Sigmoid colon (tissue), 7 donors: ENCODE measurements at regions of chrX and their contacts with region 1.

Region 1: DNA sequence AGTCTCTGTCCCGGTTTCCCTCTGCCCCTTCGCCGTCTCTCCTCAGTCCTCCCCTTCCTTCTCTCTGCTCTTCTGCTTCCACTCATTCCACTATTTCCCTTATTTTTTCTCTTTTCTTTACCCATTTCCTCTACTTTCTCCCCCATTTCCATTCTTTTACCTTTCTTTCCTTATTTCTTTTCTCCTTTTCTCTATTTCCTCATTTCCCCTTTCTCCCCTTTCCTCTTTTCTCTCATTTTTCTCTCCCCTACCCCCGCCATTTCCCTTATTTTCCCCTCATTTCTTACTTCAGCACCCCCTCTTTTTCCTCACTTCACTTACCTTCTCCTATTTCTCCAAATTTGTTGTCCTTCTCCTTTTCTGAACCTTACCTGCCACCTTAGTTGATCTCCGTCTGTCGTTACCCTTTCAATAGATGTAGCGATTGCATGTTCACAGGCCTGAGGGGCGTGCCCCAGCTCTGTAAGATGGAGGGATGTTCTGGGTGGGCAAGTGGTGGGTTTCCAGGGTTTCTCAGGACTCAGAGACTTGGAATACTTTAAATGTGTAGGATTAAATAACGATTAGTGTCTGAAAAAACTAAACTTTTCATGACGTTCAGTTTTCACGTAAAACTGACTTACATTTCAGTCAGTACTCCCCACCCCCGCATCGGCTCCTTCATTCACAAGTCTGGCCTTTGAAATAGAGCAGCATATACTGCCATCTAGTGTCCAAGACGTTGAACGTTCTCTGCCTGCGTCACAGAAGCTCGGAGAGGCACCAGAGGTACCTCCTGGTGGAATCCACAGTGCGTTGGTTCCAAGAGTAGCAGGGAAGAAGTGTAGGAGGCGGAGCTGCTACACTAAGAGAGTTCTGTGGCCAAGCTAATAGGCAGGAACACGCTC is 641 bp upstream of the NCBP2L start:
- DNase-seq: peak; percentile 93
- H3K4me3 ChIP-seq: peak overlapping the region; percentile 44 to 64 (median 54)
- H3K27ac ChIP-seq: peak overlapping the region; percentile 83 to 87 (median 85)
- H3K4me1 ChIP-seq: peaks cover 0 to 17% (median 4%) of the 10 kb centered on the region in 4 donors
- H3K27me3 ChIP-seq: no peaks in the 10 kb centered on the region
- CTCF ChIP-seq: peak; percentile 39 to 75 (median 64)
- EP300 ChIP-seq: no peak
- POLR2A ChIP-seq: no peak

Region 2: GRCh38 chrX:107619885-107620322 is 157.0 kb before region 1 on chrX:
- intact Hi-C with region 1: no loop called
- DNase-seq: no peak
- H3K4me3 ChIP-seq: no peak overlapping the region
- H3K27ac ChIP-seq: no peak overlapping the region
- H3K4me1 ChIP-seq: no peaks in the 10 kb centered on the region
- H3K27me3 ChIP-seq: no peaks in the 10 kb centered on the region
- CTCF ChIP-seq: no peak
- EP300 ChIP-seq: no peak
- POLR2A ChIP-seq: no peak

Region 3: DNA sequence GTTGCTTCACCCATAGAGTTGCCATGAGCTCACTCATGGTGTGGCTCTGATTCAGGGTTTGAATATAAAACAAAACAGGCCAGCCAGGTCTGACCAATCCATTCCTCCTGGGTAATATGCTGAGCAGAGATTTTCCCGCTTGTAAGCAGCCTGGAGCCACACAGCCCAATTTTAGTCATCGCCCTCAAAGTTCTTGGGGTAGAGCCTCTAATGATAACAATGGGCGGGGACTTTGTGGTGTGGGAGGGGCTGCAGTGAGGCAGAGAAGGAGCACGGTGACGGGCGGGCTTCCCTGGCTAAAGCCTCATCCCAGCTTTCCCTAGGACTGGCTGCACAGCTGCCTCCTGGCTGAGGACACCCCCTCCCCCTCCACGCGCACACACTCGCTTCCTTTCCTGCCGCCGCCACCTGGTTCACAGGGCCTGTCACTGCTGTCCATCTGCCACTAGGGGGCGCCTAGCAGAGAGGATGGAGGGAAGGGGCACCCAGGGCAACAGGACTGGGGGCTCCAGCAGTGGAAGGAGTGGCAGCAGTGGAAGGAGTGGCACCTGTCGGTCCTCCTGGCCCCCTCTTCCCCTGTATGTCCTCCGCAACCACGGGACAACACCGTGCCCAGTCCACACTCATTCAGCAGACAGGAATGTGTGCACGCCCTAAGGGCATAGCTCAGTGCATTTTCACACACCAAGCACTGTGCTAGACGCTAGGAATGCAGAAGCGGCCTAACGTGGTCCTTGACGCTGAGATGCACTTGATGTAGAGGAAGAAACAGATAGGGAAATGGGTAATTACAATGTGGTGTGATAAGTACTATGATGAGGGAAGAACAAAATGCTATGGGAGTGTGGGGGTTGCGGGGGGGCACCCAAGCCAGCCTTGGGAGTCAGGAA is 121.8 kb before region 1 on chrX:
- intact Hi-C with region 1: loop called (anchors 5 kb)
- DNase-seq: peak; percentile 88
- H3K4me3 ChIP-seq: peak overlapping the region in 1 of 4 donors; percentile 9
- H3K27ac ChIP-seq: peak overlapping the region; percentile 10 to 60 (median 36)
- H3K4me1 ChIP-seq: peaks cover 0 to 13% (median 4%) of the 10 kb centered on the region in 4 donors
- H3K27me3 ChIP-seq: no peaks in the 10 kb centered on the region
- CTCF ChIP-seq: peak; percentile 43 to 66 (median 58)
- EP300 ChIP-seq: no peak
- POLR2A ChIP-seq: no peak

Region 4: DNA sequence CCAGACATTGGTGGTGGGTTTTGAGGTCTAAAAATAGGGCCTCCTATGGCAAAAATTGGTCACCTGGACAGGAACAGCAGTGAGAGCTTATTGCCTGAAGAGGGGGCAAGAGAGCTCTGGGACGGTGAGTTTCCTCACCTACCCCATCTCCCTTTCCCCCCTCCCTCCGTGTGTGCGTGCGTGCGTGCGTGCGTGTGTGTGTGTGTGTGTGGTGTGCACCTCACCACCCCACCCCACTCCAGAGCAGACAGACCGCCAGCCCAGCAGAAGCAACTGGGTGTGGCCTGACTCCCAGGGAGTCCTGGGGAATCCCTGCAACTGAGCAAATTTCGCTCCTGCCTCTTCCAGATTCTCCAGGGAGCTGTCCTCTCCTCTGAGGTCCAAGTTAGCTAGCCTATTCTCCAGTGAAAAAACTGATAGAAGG is 103.9 kb before region 1 on chrX:
- intact Hi-C with region 1: loop called (anchors 1 kb)
- DNase-seq: peak; percentile 93
- H3K4me3 ChIP-seq: peak overlapping the region in 1 of 4 donors; percentile 4
- H3K27ac ChIP-seq: peak overlapping the region; percentile 85 to 91 (median 86)
- H3K4me1 ChIP-seq: peaks cover 0 to 28% (median 7%) of the 10 kb centered on the region in 4 donors
- H3K27me3 ChIP-seq: no peaks in the 10 kb centered on the region
- CTCF ChIP-seq: peak; percentile 52 to 65 (median 60)
- EP300 ChIP-seq: peak in 2 of 4 donors; percentile 30 to 51
- POLR2A ChIP-seq: no peak

Region 5: DNA sequence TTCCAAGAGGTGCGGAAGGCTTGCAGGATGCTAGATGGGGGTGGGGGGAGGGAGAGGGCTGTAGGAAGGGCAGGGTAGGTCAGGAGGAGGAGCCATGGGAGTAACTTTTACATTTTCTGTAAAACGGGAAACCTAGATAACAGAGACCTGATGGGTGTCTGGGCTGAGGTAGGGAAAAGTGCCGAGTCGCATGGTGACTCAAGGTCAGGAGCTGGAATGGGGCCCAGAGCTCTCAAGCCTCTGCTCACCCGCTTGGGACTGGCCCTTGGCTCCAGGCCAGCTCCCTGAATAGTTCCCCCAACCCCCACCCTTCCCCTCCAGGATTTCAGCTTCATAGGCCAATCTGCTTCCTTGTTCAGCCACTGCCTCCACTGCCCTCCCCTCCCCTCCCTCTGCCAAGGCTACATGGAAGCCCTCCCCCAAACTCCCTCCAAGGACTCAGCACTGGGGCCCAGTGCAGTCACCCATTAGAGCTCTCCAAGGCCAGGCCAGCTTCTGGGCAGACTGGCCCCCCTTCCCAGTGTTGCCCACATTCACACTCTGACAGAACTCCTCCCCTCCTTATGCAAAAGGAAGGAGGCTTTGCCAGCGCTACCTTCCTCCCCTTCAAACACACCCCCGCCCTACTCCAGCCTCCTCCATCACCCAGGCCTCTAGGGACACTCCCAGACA is 44.9 kb before region 1 on chrX:
- intact Hi-C with region 1: no loop called
- DNase-seq: peak; percentile 97
- H3K4me3 ChIP-seq: no peak overlapping the region
- H3K27ac ChIP-seq: peak overlapping the region; percentile 74 to 83 (median 80)
- H3K4me1 ChIP-seq: peaks cover 0 to 54% (median 49%) of the 10 kb centered on the region in 4 donors
- H3K27me3 ChIP-seq: no peaks in the 10 kb centered on the region
- CTCF ChIP-seq: no peak
- EP300 ChIP-seq: peak in 1 of 4 donors; percentile 27
- POLR2A ChIP-seq: no peak